Activated CD4-positive, alpha-beta memory T cell treated with anti-CD3 and anti-CD28 coated beads, Interleukin-2, amount 10 ng/mL, durations not matched to agents 7 days and 5 days (primary cell): ENCODE measurements at regions of chr6 and their contacts with region 1.

Region 1: GRCh38 chr6:113909234-113909856 is 52.2 kb downstream of the MARCKS start:
- DNase-seq: no peak
- H3K4me3 Mint-ChIP-seq: no peak overlapping the region
- H3K27ac Mint-ChIP-seq: no peak overlapping the region
- H3K4me1 Mint-ChIP-seq: no peaks in the 10 kb centered on the region
- H3K27me3 Mint-ChIP-seq: peaks cover 9% of the 10 kb centered on the region

Region 2: GRCh38 chr6:113796038-113796437 is 113.3 kb before region 1 on chr6:
- CTCF ChIA-PET with region 1: no interaction called
- POLR2A ChIA-PET with region 1: no interaction called
- DNase-seq: no peak
- H3K4me3 Mint-ChIP-seq: no peak overlapping the region
- H3K27ac Mint-ChIP-seq: no peak overlapping the region
- H3K4me1 Mint-ChIP-seq: no peaks in the 10 kb centered on the region
- H3K27me3 Mint-ChIP-seq: no peaks in the 10 kb centered on the region

Region 3: DNA sequence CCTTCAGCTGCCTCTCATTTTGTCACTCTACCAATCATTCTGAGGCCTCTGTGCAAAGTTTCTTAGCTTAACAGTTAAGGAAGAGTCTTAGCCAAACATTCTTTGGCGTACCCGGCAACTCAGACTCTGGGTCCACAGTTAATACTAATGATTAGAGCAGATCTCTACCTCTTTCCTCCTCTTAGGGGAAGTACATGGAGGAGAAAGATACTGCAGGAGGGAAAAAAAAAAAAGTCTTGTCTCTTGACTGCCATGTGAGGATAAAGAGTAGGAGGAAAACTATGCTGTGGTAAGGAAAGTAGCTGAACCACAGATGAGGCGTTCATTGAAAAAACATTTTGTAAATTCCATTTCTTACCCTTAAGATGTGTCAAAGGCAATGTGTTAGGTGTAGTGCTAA is 96.2 kb before region 1 on chr6:
- CTCF ChIA-PET with region 1: no interaction called
- POLR2A ChIA-PET with region 1: no interaction called
- DNase-seq: no peak
- H3K4me3 Mint-ChIP-seq: no peak overlapping the region
- H3K27ac Mint-ChIP-seq: no peak overlapping the region
- H3K4me1 Mint-ChIP-seq: no peaks in the 10 kb centered on the region
- H3K27me3 Mint-ChIP-seq: peaks cover 4% of the 10 kb centered on the region

Region 4: DNA sequence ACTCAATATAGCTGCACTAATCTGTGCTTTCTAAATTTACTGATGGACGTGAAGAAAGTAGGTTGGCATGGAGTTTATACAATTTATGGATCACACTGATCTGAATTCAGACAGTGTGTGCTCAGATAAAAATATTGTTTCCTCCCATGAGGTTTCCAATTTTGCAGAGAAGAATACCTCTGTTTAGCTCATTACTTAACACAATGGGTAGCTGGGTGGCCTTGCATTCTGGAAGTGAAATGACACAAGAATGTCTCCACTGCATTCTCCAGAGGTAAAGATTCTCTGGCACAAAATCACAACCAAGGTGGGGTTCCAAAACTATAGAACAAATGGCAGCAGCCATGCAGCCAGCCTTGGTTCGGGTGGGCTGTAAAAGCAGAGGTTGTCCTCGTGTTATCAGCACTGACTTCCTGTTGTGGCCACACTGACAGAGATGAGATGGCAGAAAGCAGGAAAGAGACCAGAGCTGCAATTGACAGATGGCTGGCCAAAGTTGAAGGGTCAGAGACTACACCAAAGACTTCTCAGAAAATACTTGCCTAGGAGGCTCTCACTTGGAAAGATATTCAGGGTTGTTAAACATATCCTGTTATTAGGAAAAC is 11.4 kb after region 1 on chr6:
- CTCF ChIA-PET with region 1: interaction called, 23 read pairs
- POLR2A ChIA-PET with region 1: no interaction called
- DNase-seq: peak; percentile 26
- H3K4me3 Mint-ChIP-seq: no peak overlapping the region
- H3K27ac Mint-ChIP-seq: no peak overlapping the region
- H3K4me1 Mint-ChIP-seq: peaks cover 11% of the 10 kb centered on the region
- H3K27me3 Mint-ChIP-seq: peaks cover 4% of the 10 kb centered on the region

Region 5: GRCh38 chr6:114714836-114715507 is 805.6 kb after region 1 on chr6:
- CTCF ChIA-PET with region 1: no interaction called
- POLR2A ChIA-PET with region 1: no interaction called
- DNase-seq: no peak
- H3K4me3 Mint-ChIP-seq: no peak overlapping the region
- H3K27ac Mint-ChIP-seq: no peak overlapping the region
- H3K4me1 Mint-ChIP-seq: no peaks in the 10 kb centered on the region
- H3K27me3 Mint-ChIP-seq: no peaks in the 10 kb centered on the region